ENCODE measurements at regions of chr10 and their contacts with region 1.

Region 1: DNA sequence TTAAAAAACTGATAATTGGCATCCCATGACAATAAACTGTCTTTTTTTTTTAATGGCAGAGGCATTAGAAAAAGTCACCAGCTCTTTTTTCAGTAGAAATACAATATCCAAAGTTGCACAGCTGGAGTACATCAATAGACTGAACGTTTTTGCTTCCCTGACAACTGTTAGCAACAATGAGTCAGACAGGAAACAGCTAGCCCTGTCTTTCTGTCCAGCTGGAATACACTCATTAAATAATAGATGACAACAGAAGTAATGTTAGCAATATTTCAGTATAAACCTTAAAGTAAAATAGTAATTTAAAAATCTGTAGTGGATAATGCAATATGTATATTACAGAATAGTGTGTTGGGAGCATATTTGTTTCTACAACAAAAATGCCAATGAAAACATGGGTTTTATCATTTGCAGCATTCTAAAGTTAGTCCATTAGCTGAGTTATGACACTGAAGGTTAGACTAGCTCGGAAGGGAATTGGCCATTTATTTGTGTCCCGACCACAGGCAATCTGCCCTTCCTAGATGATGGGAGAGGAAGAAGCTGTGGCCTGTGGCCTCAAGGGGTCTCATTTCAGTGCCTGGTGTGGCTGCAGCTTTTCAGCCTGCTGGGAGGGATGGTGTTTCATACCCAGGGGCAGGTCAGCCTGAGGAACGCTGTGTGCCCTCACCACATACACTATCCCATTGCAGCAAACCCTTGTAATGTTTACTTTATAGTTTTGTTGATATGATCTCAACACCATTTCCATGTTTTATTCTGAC is 173.3 kb downstream of the SLC16A9 start:
- DNase-seq: peak; percentile 70
- H3K4me3 ChIP-seq: no peak overlapping the region
- H3K27ac ChIP-seq: peak overlapping the region; percentile 61 to 85 (median 79)
- H3K4me1 ChIP-seq: peaks cover 0 to 30% (median 26%) of the 10 kb centered on the region in 4 donors
- H3K27me3 ChIP-seq: no peaks in the 10 kb centered on the region
- CTCF ChIP-seq: no peak
- EP300 ChIP-seq: peak in 3 of 4 donors; percentile 50 to 87 (median 50)
- POLR2A ChIP-seq: no peak

Region 2: DNA sequence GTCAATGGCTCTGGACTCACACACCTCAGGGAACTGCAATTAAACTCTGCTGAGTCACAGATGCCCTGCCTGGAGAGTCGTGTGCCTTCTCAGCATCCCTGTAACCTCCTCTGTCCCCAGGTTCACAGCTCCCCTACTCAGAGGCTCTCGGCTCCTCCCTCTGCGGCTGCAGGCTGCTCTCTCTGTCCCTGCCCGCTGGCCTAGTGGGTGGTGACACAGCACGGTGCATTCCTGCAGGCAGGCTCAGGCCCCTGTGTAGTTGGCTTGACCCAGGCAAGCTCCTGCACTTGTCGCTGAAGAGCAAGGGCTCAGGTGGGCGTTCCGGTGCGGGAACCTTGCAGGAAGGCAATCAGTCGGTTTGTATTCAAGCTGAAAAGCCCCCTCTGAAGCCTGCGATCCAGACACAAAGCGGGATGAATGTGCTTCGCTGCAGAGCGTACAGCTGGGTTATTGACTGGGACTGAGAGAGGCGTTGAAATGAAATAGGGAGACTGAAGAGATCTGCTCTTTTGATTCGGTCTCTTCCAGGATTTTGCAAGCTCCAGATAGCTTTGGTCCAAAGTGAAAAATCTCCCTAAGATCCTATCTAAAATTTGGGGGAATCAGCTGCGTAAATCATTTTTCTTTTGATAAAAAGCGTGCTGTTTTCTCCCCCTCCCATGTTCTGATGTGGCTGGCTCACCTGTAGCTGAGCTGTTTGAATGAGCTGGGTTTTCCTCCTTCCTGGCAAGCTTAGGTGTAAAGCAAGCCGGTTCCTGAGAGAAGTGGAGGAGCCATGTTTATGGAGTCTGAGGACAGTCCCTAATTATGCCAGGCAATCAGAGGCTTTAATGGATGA is 568.6 kb before region 1 on chr10:
- intact Hi-C with region 1: no loop called
- DNase-seq: no peak
- H3K4me3 ChIP-seq: no peak overlapping the region
- H3K27ac ChIP-seq: no peak overlapping the region
- H3K4me1 ChIP-seq: no peaks in the 10 kb centered on the region
- H3K27me3 ChIP-seq: no peaks in the 10 kb centered on the region
- CTCF ChIP-seq: no peak
- EP300 ChIP-seq: no peak
- POLR2A ChIP-seq: no peak

Region 3: GRCh38 chr10:59362144-59362958 is 174.0 kb before region 1 on chr10 and contains the start of gene FAM13C:
- intact Hi-C with region 1: loop called (anchors 10 kb)
- DNase-seq: peak; percentile 86
- H3K4me3 ChIP-seq: peak within 1 kb of the TSS; percentile 58 to 70 (median 66)
- H3K27ac ChIP-seq: peak within 1 kb of the TSS; percentile 85 to 90 (median 87)
- H3K4me1 ChIP-seq: peaks cover 0 to 48% (median 31%) of the 10 kb centered on the region in 4 donors
- H3K27me3 ChIP-seq: no peaks in the 10 kb centered on the region
- CTCF ChIP-seq: peak in 1 of 4 experiments; percentile 16
- EP300 ChIP-seq: no peak
- POLR2A ChIP-seq: no peak
- total RNA-seq, gene FAM13C: 13.8 to 33.9 (median 22.7) TPM

Region 4: DNA sequence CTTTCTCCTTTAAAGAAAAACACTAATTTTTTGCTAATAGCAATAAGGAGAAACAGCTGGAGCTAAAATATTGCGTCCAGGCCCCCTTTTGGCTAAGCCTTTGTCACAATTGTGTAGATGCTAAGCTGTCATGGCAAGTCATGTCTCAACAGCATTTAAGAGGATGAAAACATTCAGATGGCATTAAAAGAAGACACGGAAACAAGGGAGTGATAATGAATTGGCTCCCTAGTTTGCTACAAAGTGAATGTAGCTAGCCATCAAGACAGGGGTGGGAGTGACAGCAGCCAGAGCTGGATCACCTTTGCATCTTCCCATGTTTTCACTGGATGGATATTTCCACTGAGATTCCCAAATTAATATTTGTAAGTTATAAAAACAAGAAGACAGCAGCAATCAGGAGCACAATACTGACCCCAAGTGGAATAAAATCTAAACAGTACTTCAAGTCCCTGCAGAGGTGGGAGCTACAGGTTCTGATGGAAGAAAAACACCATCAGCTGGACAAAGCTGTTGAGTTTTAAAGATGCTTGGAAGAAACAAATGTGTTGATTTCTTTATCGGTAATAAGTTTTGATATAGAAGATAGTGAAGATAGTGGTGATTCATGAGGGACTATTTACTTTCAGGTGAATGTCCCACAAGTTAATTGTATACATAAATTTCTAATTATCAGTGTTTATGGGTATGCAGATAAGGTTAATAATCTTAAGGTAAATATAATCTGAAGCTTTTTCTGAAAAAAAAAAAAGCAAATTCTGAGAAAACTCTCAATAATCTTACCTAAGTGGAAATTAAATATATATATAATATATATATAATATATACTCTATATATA is 43.9 kb after region 1 on chr10:
- intact Hi-C with region 1: loop called (anchors 5 kb)
- DNase-seq: no peak
- H3K4me3 ChIP-seq: no peak overlapping the region
- H3K27ac ChIP-seq: peak overlapping the region in 1 of 4 donors; percentile 16
- H3K4me1 ChIP-seq: peaks cover 0 to 67% (median 25%) of the 10 kb centered on the region in 4 donors
- H3K27me3 ChIP-seq: no peaks in the 10 kb centered on the region
- CTCF ChIP-seq: peak in 3 of 4 experiments; percentile 26 to 50 (median 42)
- EP300 ChIP-seq: no peak
- POLR2A ChIP-seq: no peak

Measured in sigmoid colon (tissue), 7 donors.